GM23248 (cell line): ENCODE measurements at regions of chr1 and their contacts with region 1.

Region 1: GRCh38 chr1:84763912-84764663 is 73.8 kb upstream of the SSX2IP start:
- DNase-seq: peak; percentile 38
- H3K4me3 ChIP-seq: no peak overlapping the region
- H3K27ac ChIP-seq: no peak overlapping the region
- H3K4me1 ChIP-seq: no peaks in the 10 kb centered on the region
- H3K27me3 ChIP-seq: peaks cover 8% of the 10 kb centered on the region; the same call in 1 of the 2 replicates

Region 2: GRCh38 chr1:84936116-84936810 is 172.2 kb after region 1 on chr1:
- in situ Hi-C with region 1: loop called (anchors 10 kb)
- DNase-seq: peak; percentile 73
- H3K4me3 ChIP-seq: no peak overlapping the region
- H3K27ac ChIP-seq: no peak overlapping the region
- H3K4me1 ChIP-seq: peaks cover 14% of the 10 kb centered on the region
- H3K27me3 ChIP-seq: no peaks in the 10 kb centered on the region